GM10248 (cell line): ENCODE measurements at regions of chr1 and their contacts with region 1.

Region 1: DNA sequence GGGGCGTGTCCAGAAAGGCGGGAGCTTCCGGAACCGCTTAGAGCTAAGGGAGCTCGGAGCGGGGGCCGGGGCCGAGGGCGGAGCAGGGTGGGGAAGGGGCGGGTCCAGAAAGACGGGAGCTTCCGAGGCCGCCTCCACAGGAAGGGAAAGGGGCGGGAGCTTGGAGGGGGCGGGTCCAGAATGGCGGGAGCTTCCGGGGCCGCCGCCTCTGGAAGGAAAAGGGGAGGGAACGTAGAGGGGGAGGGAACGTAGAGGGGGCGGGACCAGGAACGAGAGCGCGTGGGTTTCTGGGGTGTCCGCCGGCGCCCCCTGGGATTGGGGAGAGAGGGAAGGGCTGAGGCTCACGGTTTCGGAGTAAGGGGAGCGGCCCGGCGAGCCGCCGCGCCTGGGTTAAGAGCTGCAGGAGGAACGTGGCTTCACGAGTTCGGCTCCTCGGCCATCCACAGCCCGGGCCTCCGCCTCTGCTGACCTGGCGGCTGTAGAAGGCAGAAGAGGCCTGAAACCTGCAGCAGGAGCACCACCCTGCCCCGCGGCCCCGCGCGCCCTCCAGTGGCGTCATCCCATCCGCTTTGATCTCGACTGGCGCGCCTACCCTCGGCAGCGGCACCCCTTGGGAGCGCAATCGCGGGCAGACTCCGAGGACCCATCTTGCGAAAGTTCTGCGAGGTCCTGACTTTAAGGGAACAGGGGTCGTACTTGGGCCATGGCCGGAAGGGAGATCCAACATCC is 22.9 kb upstream of the HPDL start:
- DNase-seq: peak; percentile 98
- CTCF ChIP-seq: peak; percentile 82

Region 2: GRCh38 chr1:44721485-44722361 is 582.0 kb before region 1 on chr1:
- CTCF ChIA-PET with region 1: interaction called, 3 read pairs
- POLR2A ChIA-PET with region 1: interaction called, 12 read pairs
- DNase-seq: peak; percentile 79
- CTCF ChIP-seq: no peak

Region 3: GRCh38 chr1:44835738-44836675 is 467.7 kb before region 1 on chr1:
- CTCF ChIA-PET with region 1: interaction called, 27 read pairs
- POLR2A ChIA-PET with region 1: no interaction called
- DNase-seq: peak; percentile 88
- CTCF ChIP-seq: peak; percentile 84

Region 4: DNA sequence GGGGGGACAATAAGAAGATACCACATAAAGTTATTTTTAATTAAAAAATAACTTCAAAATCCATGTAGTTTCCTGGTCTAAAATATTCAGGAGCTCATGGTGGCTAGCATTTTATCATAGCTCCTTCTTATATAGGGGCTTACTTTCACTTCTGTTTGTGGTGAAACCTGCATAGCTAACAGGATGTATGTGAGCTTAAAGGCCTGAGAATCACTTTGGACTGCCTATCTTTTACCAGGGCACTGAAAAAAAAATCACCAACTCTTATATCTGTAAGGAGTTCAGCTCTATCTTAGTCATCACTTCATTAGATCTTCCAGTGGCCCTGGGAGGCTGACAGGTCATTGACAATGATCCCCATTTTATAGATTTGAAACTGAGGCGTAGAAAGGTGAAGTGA is 270.4 kb before region 1 on chr1:
- CTCF ChIA-PET with region 1: interaction called, 13 read pairs
- POLR2A ChIA-PET with region 1: no interaction called
- DNase-seq: peak; percentile 65
- CTCF ChIP-seq: no peak

Region 5: DNA sequence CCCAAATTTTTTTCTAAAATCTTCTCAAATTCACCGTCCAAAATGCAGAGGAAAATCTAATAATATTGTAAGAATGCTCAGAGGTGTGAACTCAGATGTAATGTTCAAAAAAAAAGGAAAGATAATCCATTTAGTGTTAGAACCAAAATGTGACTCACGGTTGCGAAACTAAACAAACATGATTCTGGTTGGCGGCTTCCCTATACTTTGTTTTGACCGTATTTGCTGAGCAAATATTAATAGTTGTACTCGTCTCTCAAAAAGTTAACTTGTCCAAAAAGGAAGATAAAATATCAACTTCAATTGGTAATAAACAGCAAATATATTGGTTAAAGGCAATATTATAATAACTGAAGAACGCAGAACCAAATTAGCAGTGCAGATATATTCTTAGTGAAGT is 131.7 kb before region 1 on chr1:
- CTCF ChIA-PET with region 1: no interaction called
- POLR2A ChIA-PET with region 1: no interaction called
- DNase-seq: no peak
- CTCF ChIP-seq: no peak

Region 6: GRCh38 chr1:45319761-45320160 is 16.0 kb after region 1 on chr1:
- CTCF ChIA-PET with region 1: interaction called, 11 read pairs
- POLR2A ChIA-PET with region 1: interaction called, 3 read pairs
- DNase-seq: no peak
- CTCF ChIP-seq: no peak

Region 7: GRCh38 chr1:45490626-45491486 is 187.1 kb after region 1 on chr1 and contains the start of gene TESK2:
- CTCF ChIA-PET with region 1: interaction called, 23 read pairs
- POLR2A ChIA-PET with region 1: interaction called, 3 read pairs
- DNase-seq: peak; percentile 95
- CTCF ChIP-seq: no peak